ENCODE measurements at regions of chr9 and their contacts with region 1.

Region 1: DNA sequence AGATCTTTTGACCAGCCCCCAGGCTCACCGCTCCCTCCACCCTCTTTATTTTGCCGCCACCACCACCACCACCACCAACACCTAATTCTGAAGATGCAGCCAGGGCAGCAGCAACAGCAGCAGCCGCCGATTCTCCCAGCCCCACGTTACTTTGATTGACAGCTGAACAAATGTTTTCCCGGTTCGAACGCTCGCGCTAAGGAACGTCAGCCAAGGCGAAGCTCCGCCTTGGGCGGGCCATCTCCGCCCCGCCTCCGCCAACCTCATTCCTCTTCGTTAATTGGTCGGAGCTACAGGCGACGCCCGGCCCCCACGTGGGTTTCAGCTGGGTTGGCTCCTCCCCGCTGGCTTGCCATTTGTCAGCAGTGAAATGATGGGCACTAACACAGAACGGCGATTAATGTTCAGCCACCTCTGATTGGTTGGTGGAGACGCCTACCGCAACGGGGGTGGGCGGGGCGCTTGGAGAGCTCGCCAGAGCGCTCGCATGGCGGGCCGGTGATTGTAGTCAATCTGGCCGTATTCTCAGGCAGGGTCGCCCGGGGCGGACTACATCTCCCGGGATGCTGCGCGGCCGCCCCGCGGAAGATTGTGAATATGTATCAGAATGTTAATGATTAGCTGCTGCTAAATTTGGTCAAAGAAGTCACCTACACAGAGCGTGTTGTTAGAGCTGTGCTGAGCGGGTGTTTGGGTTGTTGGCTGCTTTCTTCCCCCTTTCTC is at the start of gene TLE4:
- DNase-seq: peak; percentile 94
- ATAC-seq: peak; percentile 84
- H3K4me3 Mint-ChIP-seq: peak within 1 kb of the TSS; percentile 90
- H3K27ac Mint-ChIP-seq: peak within 1 kb of the TSS; percentile 46
- H3K4me1 Mint-ChIP-seq: peaks cover 38% of the 10 kb centered on the region
- H3K27me3 Mint-ChIP-seq: no peaks in the 10 kb centered on the region
- CTCF ChIP-seq: no peak
- total RNA-seq, gene TLE4: 62.6 and 63.9 TPM in 2 replicates

Region 2: DNA sequence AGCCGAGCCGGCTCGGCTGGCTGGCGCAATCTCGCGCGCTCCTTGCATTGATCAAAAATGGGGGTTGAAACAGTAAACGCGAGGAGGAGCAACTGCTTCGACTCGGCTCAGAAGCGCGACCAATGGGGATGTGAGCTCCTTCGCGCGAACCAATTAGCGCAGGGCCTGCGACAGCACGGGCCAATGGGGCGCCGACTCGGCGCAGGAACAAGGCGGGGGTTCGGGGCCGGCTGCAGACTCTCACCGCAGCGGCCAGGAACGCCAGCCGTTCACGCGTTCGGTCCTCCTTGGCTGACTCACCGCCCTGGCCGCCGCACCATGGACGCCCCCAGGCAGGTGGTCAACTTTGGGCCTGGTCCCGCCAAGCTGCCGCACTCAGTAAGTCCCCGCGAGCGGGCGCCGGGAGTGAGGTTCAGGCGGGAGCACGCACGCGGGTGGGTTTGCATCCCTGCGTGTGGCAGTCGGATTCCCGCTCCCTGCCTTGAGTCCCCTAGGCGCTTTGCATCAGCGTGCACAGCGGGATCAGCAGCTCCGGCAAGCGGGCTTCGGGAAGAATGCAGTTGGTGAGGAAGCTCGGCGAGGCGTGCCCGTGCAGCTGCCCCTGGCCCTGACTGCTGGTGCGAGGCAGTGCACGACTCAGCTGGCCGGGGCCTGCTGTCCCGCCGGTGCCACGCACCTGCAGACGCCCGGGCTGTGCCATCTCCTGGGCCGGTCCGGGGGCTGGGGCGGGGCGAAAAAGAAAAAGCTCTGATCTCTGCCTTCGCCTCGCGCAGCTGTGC is 1274.4 kb before region 1 on chr9 and contains the start of gene PSAT1:
- CTCF ChIA-PET with region 1: no interaction called
- POLR2A ChIA-PET with region 1: interaction called, 8 read pairs
- intact Hi-C with region 1: loop called (anchors 2 kb)
- DNase-seq: peak; percentile 75
- ATAC-seq: peak; percentile 96
- H3K4me3 Mint-ChIP-seq: peak within 1 kb of the TSS; percentile 89
- H3K27ac Mint-ChIP-seq: peak within 1 kb of the TSS; percentile 82
- H3K4me1 Mint-ChIP-seq: peaks cover 24% of the 10 kb centered on the region
- H3K27me3 Mint-ChIP-seq: peaks cover 7% of the 10 kb centered on the region
- CTCF ChIP-seq: no peak
- total RNA-seq, gene PSAT1: 58.3 and 59.4 TPM in 2 replicates

Region 3: DNA sequence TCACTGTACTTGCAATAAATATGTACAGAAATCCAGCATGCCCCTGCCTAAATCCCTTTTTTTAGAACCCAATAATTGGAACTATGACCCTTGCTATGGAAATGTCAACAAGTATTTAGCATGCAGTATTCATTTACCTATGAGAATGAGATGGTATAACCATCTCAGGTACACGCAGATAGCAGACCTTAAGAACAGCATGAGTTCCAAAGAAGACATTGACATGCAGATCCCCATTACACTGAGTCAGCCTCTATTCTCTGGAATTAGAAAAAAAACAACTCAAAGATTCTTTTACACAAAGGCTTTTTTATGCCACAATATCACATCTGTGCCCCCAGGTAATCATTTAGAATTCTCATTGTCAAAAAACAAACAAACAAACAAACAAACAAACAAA is 325.3 kb before region 1 on chr9:
- CTCF ChIA-PET with region 1: no interaction called
- POLR2A ChIA-PET with region 1: no interaction called
- intact Hi-C with region 1: no loop called
- DNase-seq: no peak
- ATAC-seq: no peak
- H3K4me3 Mint-ChIP-seq: no peak overlapping the region
- H3K27ac Mint-ChIP-seq: no peak overlapping the region
- H3K4me1 Mint-ChIP-seq: no peaks in the 10 kb centered on the region
- H3K27me3 Mint-ChIP-seq: peaks cover 2% of the 10 kb centered on the region
- CTCF ChIP-seq: no peak

Region 4: DNA sequence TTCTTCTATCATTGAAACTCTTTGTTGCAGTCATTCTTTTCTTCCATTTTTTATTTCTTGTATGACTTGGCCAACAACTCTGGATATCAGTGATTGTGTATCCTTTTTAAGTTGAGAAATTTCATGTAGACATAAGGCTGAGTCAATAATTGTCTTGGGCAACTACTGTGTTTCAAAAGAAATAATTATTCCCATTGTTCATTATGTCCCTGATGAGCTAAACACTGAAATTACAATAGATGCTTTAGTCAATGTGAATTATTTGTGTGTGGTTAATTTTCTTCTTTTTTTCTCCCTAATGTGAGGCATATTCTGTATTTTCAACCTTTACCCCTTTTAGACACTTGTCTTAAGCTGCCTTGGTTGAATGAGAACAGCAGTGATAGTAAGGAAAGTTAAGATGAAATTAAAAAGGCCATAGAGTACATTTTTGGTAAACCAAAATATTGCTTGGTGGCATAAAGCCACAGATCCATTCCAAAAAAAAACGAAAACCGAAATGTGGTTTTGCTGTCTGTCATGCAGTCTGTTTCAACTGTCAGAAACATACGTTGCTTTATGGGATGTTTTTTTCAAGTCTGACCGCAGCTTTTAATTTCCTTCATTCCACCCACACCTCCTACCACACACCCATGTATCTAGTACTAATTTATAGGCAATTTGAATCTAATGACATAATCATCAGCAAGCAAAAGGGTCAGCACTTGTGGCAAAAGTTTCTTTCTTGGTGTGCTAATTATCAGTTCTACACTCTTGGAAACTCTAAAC is 21.4 kb after region 1 on chr9:
- CTCF ChIA-PET with region 1: interaction called, 3 read pairs
- POLR2A ChIA-PET with region 1: interaction called, 6 read pairs
- intact Hi-C with region 1: loop called (anchors 1 kb)
- DNase-seq: no peak
- ATAC-seq: no peak
- H3K4me3 Mint-ChIP-seq: peak overlapping the region; percentile 33
- H3K27ac Mint-ChIP-seq: no peak overlapping the region
- H3K4me1 Mint-ChIP-seq: peaks cover 60% of the 10 kb centered on the region
- H3K27me3 Mint-ChIP-seq: no peaks in the 10 kb centered on the region
- CTCF ChIP-seq: no peak

Region 5: GRCh38 chr9:79817438-79818004 is 246.1 kb after region 1 on chr9:
- CTCF ChIA-PET with region 1: no interaction called
- POLR2A ChIA-PET with region 1: interaction called, 14 read pairs
- intact Hi-C with region 1: loop called (anchors 1 kb)
- DNase-seq: peak; percentile 24
- ATAC-seq: peak; percentile 72
- H3K4me3 Mint-ChIP-seq: peak overlapping the region; percentile 17
- H3K27ac Mint-ChIP-seq: peak overlapping the region; percentile 47
- H3K4me1 Mint-ChIP-seq: peaks cover 52% of the 10 kb centered on the region
- H3K27me3 Mint-ChIP-seq: peaks cover 2% of the 10 kb centered on the region
- CTCF ChIP-seq: no peak

Region 6: DNA sequence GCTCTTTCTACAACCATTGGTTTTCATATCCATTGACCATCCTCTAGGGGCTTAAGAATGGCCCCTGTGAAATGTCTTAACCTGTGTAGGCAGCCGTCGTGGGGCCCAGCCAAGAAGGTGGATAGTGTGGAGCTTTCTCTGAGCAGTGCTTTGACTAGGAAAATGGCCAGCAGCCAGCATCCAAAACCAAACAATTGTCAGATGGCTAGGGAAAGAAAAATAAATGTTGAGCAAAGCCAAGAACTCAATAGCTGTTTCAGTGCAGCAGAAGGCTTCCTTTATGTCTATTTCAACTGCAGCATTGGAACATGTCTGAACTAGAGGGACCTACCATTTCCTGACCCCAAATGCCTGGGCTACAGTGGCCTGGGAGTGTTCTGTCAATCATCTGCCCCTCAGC is 375.2 kb after region 1 on chr9:
- CTCF ChIA-PET with region 1: no interaction called
- POLR2A ChIA-PET with region 1: no interaction called
- intact Hi-C with region 1: loop called (anchors 2 kb)
- DNase-seq: no peak
- ATAC-seq: no peak
- H3K4me3 Mint-ChIP-seq: no peak overlapping the region
- H3K27ac Mint-ChIP-seq: no peak overlapping the region
- H3K4me1 Mint-ChIP-seq: no peaks in the 10 kb centered on the region
- H3K27me3 Mint-ChIP-seq: no peaks in the 10 kb centered on the region
- CTCF ChIP-seq: no peak

Region 7: GRCh38 chr9:80231201-80231950 is 659.9 kb after region 1 on chr9:
- CTCF ChIA-PET with region 1: no interaction called
- POLR2A ChIA-PET with region 1: interaction called, 11 read pairs
- intact Hi-C with region 1: loop called (anchors 5 kb)
- DNase-seq: no peak
- ATAC-seq: no peak
- H3K4me3 Mint-ChIP-seq: peak overlapping the region; percentile 68
- H3K27ac Mint-ChIP-seq: peak overlapping the region; percentile 93
- H3K4me1 Mint-ChIP-seq: peaks cover 53% of the 10 kb centered on the region
- H3K27me3 Mint-ChIP-seq: no peaks in the 10 kb centered on the region
- CTCF ChIP-seq: no peak

Measured in activated B cell treated with CpG ODN at 0.5 μM for 24 hours (primary cell).